Naive thymus-derived CD4-positive, alpha-beta T cell (primary cell): ENCODE measurements at regions of chr9 and their contacts with region 1.

Region 1: GRCh38 chr9:33290247-33291030 is at the start of gene NFX1:
- DNase-seq: peak; percentile 94 to 100 (median 99)
- ATAC-seq: peak; percentile 89
- H3K4me3 ChIP-seq: peak within 1 kb of the TSS; percentile 76
- H3K4me3 Mint-ChIP-seq: peak within 1 kb of the TSS; percentile 83 to 99 (median 94)
- H3K27ac ChIP-seq: peak within 1 kb of the TSS; percentile 93
- H3K27ac Mint-ChIP-seq: peak within 1 kb of the TSS; percentile 96 to 100 (median 99)
- H3K4me1 ChIP-seq: peaks cover 11 to 49% of the 10 kb centered on the region in 2 donors
- H3K4me1 Mint-ChIP-seq: peaks cover 36 to 72% (median 58%) of the 10 kb centered on the region in 7 donors
- H3K27me3 ChIP-seq: no peaks in the 10 kb centered on the region
- H3K27me3 Mint-ChIP-seq: peaks cover 0 to 4% (median 0%) of the 10 kb centered on the region in 5 donors
- total RNA-seq, gene NFX1: 39.8 to 65.4 (median 43.6) TPM

Region 2: DNA sequence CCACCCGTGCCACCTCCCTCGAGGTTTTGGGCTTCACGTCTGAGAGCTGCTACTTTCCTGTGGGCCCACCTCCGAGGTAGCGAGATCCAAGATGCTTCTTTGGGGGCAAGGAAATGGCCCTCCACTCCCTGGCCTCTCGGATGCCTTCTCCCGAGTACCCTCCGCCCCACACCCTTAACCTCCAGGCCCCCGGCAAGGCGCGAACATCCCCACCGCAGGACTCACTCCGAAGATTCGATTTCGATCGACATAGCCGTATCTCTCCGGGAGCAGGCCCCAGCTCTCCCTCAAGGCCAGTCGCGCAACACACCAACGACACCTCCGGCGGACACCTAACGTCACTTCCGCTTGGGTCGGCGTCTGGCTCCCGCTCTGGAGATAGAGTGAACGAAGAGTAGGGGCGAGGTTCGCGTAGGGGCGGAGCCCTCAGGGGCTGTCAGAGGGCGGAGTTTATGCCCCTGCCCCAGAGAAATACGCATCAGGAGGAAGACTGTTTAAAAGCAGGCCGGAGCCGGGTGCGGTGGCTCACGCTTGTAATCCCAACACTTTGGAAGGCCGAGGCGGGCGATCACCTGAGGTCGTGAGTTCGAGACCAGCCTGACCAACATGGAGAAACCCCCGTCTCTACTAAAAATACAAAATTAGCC is 214.0 kb before region 1 on chr9 and contains the start of gene SMU1:
- CTCF ChIA-PET with region 1: no interaction called
- POLR2A ChIA-PET with region 1: interaction called, 3 read pairs
- intact Hi-C with region 1: loop called (anchors 1 kb)
- DNase-seq: peak; percentile 82 to 97 (median 95)
- ATAC-seq: peak; percentile 97
- H3K4me3 ChIP-seq: peak within 1 kb of the TSS; percentile 82
- H3K4me3 Mint-ChIP-seq: peak within 1 kb of the TSS; percentile 95 to 100 (median 98)
- H3K27ac ChIP-seq: peak within 1 kb of the TSS; percentile 93
- H3K27ac Mint-ChIP-seq: peak within 1 kb of the TSS; percentile 97 to 100 (median 99)
- H3K4me1 ChIP-seq: peaks cover 16 to 21% of the 10 kb centered on the region in 2 donors
- H3K4me1 Mint-ChIP-seq: peaks cover 17 to 61% (median 48%) of the 10 kb centered on the region in 7 donors
- H3K27me3 ChIP-seq: no peaks in the 10 kb centered on the region
- H3K27me3 Mint-ChIP-seq: no peaks in the 10 kb centered on the region
- total RNA-seq, gene SMU1: 22.3 to 32.9 (median 25.6) TPM

Region 3: GRCh38 chr9:33306037-33306436 is 15.6 kb after region 1 on chr9:
- CTCF ChIA-PET with region 1: interaction called, 10 read pairs
- POLR2A ChIA-PET with region 1: interaction called, 13 read pairs
- intact Hi-C with region 1: loop called (anchors 1 to 2 kb)
- DNase-seq: peak in 1 of 9 donors; percentile 30
- ATAC-seq: no peak
- H3K4me3 ChIP-seq: no peak overlapping the region
- H3K4me3 Mint-ChIP-seq: no peak overlapping the region
- H3K27ac ChIP-seq: no peak overlapping the region
- H3K27ac Mint-ChIP-seq: no peak overlapping the region
- H3K4me1 ChIP-seq: peaks cover 0 to under 1% of the 10 kb centered on the region in 2 donors
- H3K4me1 Mint-ChIP-seq: peaks cover 0 to 17% (median 6%) of the 10 kb centered on the region in 7 donors
- H3K27me3 ChIP-seq: no peaks in the 10 kb centered on the region
- H3K27me3 Mint-ChIP-seq: no peaks in the 10 kb centered on the region

Region 4: DNA sequence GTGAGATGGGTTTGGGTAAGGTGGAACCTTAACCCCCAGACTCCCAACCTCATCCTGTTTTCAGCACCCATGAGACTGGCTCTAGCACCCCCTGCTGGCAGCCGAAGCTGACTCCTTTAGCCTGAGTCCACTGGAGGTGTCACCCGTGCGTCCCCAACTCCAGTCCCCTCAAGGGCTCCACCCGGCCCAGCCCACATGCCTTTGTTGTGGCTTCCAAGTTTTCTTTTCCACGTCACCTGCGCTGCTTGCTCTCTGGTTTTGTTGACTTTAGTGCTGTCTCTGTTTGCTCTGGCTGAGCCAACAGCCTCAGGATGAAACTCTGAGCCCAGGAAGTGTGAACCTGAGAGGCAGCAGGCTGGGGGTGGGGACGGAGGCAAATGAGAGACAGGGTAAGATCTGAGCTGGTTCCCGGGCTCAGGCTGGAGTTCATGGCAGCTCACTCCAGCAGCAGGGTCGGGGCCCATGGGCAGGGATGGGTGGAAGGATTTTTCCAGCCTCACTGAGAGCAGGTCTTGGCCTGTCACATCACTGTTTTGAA is 125.1 kb after region 1 on chr9:
- CTCF ChIA-PET with region 1: interaction called, 3 read pairs
- POLR2A ChIA-PET with region 1: interaction called, 20 read pairs
- intact Hi-C with region 1: loop called (anchors 1 kb)
- DNase-seq: peak; percentile 82 to 98 (median 96)
- ATAC-seq: peak; percentile 97
- H3K4me3 ChIP-seq: peak overlapping the region; percentile 25
- H3K4me3 Mint-ChIP-seq: peak overlapping the region; percentile 74 to 89 (median 84)
- H3K27ac ChIP-seq: peak overlapping the region; percentile 75
- H3K27ac Mint-ChIP-seq: peak overlapping the region; percentile 93 to 99 (median 97)
- H3K4me1 ChIP-seq: peaks cover 34 to 44% of the 10 kb centered on the region in 2 donors
- H3K4me1 Mint-ChIP-seq: peaks cover 31 to 51% (median 45%) of the 10 kb centered on the region in 7 donors
- H3K27me3 ChIP-seq: no peaks in the 10 kb centered on the region
- H3K27me3 Mint-ChIP-seq: peaks cover 0 to 8% (median 0%) of the 10 kb centered on the region in 5 donors

Region 5: GRCh38 chr9:33517373-33517772 is 226.9 kb after region 1 on chr9:
- CTCF ChIA-PET with region 1: no interaction called
- POLR2A ChIA-PET with region 1: no interaction called
- intact Hi-C with region 1: loop called (anchors 1 kb)
- DNase-seq: peak in 1 of 9 donors; percentile 22
- ATAC-seq: peak; percentile 46
- H3K4me3 ChIP-seq: no peak overlapping the region
- H3K4me3 Mint-ChIP-seq: no peak overlapping the region
- H3K27ac ChIP-seq: no peak overlapping the region
- H3K27ac Mint-ChIP-seq: no peak overlapping the region
- H3K4me1 ChIP-seq: no peaks in the 10 kb centered on the region
- H3K4me1 Mint-ChIP-seq: no peaks in the 10 kb centered on the region
- H3K27me3 ChIP-seq: peaks cover 0 to 4% of the 10 kb centered on the region in 2 donors
- H3K27me3 Mint-ChIP-seq: peaks cover 9 to 41% (median 16%) of the 10 kb centered on the region in 5 donors

Region 6: GRCh38 chr9:34048923-34049697 is 758.7 kb after region 1 on chr9:
- CTCF ChIA-PET with region 1: no interaction called
- POLR2A ChIA-PET with region 1: no interaction called
- intact Hi-C with region 1: loop called in 1 of 2 experiments (anchors 1 kb)
- DNase-seq: peak; percentile 96 to 99 (median 97)
- ATAC-seq: peak; percentile 93
- H3K4me3 ChIP-seq: peak overlapping the region; percentile 98
- H3K4me3 Mint-ChIP-seq: peak overlapping the region; percentile 96 to 100 (median 98)
- H3K27ac ChIP-seq: peak overlapping the region; percentile 86
- H3K27ac Mint-ChIP-seq: peak overlapping the region; percentile 98 to 100 (median 99)
- H3K4me1 ChIP-seq: peaks cover 11 to 22% of the 10 kb centered on the region in 2 donors
- H3K4me1 Mint-ChIP-seq: peaks cover 25 to 55% (median 31%) of the 10 kb centered on the region in 7 donors
- H3K27me3 ChIP-seq: no peaks in the 10 kb centered on the region
- H3K27me3 Mint-ChIP-seq: peaks cover 0 to 4% (median 0%) of the 10 kb centered on the region in 5 donors